Dorsolateral prefrontal cortex (tissue), 120 donors: ENCODE measurements at regions of chr18 and their contacts with region 1.

Region 1: GRCh38 chr18:76977108-76977621 is 154.8 kb downstream of the ZNF236 start:
- DNase-seq: peak in 1 of 10 donors; percentile 47
- H3K4me3 ChIP-seq: no peak overlapping the region
- H3K27ac ChIP-seq: peak overlapping the region in 57 of 59 donors; percentile 5 to 93 (median 69)
- H3K27me3 ChIP-seq: no peaks in the 10 kb centered on the region
- CTCF ChIP-seq: no peak

Region 2: GRCh38 chr18:76859474-76860339 is 117.5 kb before region 1 on chr18:
- intact Hi-C with region 1: no loop called
- DNase-seq: no peak
- H3K4me3 ChIP-seq: no peak overlapping the region
- H3K27ac ChIP-seq: no peak overlapping the region
- H3K27me3 ChIP-seq: no peaks in the 10 kb centered on the region
- CTCF ChIP-seq: no peak

Region 3: GRCh38 chr18:76922107-76922506 is 55.1 kb before region 1 on chr18:
- intact Hi-C with region 1: loop called in 1 of 2 experiments (anchors 2 kb)
- DNase-seq: peak in 9 of 10 donors; percentile 59 to 81 (median 75)
- H3K4me3 ChIP-seq: no peak overlapping the region
- H3K27ac ChIP-seq: peak overlapping the region in 2 of 59 donors; percentile 2 to 14
- H3K27me3 ChIP-seq: no peaks in the 10 kb centered on the region
- CTCF ChIP-seq: peak; percentile 33 to 98 (median 79)